Activated T-helper 2 cell treated with anti-CD3 and anti-CD28 coated beads, Interferon-gamma antibody, Interleukin-2, Interleukin-4, amounts not matched to agents 10 μg/mL and 5 μg/mL and 100 μg/mL, durations not matched to agents 14 hours and 24 hours and 36 hours (primary cell): ENCODE measurements at regions of chr1 and their contacts with region 1.

Region 1: DNA sequence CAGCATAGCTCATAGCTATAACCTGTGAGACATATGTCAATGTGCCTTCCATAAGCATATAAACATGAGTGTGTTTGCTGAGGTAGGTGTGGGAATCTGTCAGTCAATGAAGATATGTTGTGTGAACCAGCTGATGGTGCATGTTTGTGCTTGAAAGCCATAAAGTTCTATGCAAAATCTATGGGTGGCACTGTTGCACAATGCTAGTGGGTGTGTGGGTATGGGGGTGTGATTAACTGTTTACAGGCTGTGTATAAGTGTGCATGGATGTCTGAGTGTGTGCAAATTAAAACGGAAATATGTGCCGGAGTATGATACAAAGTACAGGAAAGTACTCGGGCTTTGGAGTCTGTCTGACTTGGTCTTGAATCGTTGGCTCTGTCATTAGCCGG is 1.0 kb upstream of the ATP2B4 start:
- DNase-seq: peak; percentile 60
- H3K4me3 Mint-ChIP-seq: peak overlapping the region; percentile 96
- H3K27ac Mint-ChIP-seq: peak overlapping the region; percentile 91
- H3K4me1 Mint-ChIP-seq: peaks cover 66% of the 10 kb centered on the region
- H3K27me3 Mint-ChIP-seq: no peaks in the 10 kb centered on the region

Region 2: DNA sequence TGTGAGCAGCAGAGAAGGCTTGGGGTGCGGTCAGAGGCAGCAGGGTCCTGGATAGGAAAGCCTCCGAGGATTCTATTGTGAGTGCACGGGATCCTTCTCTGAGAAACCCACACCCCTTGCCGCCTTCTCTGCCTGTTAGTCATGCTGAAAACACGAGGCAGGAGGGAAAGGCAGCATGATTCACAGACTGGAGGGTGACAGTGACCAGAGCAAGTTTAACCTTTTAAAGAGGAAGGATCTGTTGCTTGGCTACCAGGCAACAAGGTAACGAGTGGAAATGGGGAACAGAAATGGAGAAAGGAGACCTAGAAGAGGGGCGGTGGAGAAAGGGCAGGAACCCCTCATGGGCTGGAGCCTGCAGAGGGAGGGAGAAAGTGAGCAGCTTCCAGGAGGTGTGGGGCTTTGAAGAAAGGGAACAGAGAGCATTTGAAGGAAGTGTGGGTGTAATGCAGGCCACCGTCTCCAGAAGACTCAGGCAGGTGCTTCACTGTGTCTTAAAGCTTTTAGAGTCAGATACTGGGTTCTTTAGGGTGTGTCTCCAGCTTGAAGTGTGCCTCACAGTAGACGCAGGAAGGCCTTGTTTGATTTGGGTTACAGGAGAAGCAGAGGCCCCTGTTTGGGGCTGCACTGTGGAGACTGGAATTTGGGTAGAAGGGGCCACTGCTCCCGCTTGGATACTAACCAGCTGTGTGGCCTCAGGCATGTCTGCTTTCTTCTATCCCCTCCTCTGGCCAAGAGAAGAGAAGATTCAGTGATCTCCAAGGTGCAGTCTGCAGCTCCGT is 112.6 kb before region 1 on chr1:
- intact Hi-C with region 1: loop called (anchors 5 kb)
- DNase-seq: no peak
- H3K4me3 Mint-ChIP-seq: peak overlapping the region; percentile 6
- H3K27ac Mint-ChIP-seq: peak overlapping the region; percentile 85
- H3K4me1 Mint-ChIP-seq: peaks cover 24% of the 10 kb centered on the region
- H3K27me3 Mint-ChIP-seq: no peaks in the 10 kb centered on the region

Region 3: DNA sequence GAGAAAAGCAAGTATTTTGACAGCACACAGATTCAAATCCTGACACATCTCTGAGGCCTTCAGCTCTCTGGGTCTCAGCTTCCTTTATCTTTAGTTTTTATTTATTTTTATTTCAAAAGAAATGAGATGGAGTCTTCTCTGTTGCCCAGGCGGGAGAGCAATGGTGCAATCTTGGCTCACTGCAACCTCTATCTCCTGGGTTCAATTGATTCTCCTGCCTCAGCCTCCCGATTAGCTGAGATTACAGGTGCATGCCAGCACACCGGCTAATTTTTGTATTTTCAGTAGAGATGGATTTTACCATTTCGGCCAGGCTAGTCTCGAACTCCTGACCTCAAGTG is 18.1 kb before region 1 on chr1:
- intact Hi-C with region 1: loop called (anchors 1 kb)
- DNase-seq: no peak
- H3K4me3 Mint-ChIP-seq: no peak overlapping the region
- H3K27ac Mint-ChIP-seq: peak overlapping the region; percentile 99
- H3K4me1 Mint-ChIP-seq: peaks cover 46% of the 10 kb centered on the region
- H3K27me3 Mint-ChIP-seq: no peaks in the 10 kb centered on the region

Region 4: GRCh38 chr1:203649999-203650855 is 24.6 kb after region 1 on chr1:
- intact Hi-C with region 1: loop called (anchors 1 kb)
- DNase-seq: peak; percentile 41
- H3K4me3 Mint-ChIP-seq: peak overlapping the region; percentile 70
- H3K27ac Mint-ChIP-seq: peak overlapping the region; percentile 95
- H3K4me1 Mint-ChIP-seq: peaks cover 63% of the 10 kb centered on the region
- H3K27me3 Mint-ChIP-seq: no peaks in the 10 kb centered on the region

Region 5: GRCh38 chr1:203673550-203674427 is 48.2 kb after region 1 on chr1:
- intact Hi-C with region 1: loop called (anchors 1 kb)
- DNase-seq: peak; percentile 73
- H3K4me3 Mint-ChIP-seq: peak overlapping the region; percentile 69
- H3K27ac Mint-ChIP-seq: peak overlapping the region; percentile 94
- H3K4me1 Mint-ChIP-seq: peaks cover 55% of the 10 kb centered on the region
- H3K27me3 Mint-ChIP-seq: no peaks in the 10 kb centered on the region

Region 6: GRCh38 chr1:203769505-203770343 is 144.1 kb after region 1 on chr1:
- intact Hi-C with region 1: loop called (anchors 2 kb)
- DNase-seq: no peak
- H3K4me3 Mint-ChIP-seq: no peak overlapping the region
- H3K27ac Mint-ChIP-seq: peak overlapping the region; percentile 34
- H3K4me1 Mint-ChIP-seq: peaks cover 16% of the 10 kb centered on the region
- H3K27me3 Mint-ChIP-seq: no peaks in the 10 kb centered on the region